IMR-90 (cell line): ENCODE measurements at regions of chr1 and their contacts with region 1.

Region 1: DNA sequence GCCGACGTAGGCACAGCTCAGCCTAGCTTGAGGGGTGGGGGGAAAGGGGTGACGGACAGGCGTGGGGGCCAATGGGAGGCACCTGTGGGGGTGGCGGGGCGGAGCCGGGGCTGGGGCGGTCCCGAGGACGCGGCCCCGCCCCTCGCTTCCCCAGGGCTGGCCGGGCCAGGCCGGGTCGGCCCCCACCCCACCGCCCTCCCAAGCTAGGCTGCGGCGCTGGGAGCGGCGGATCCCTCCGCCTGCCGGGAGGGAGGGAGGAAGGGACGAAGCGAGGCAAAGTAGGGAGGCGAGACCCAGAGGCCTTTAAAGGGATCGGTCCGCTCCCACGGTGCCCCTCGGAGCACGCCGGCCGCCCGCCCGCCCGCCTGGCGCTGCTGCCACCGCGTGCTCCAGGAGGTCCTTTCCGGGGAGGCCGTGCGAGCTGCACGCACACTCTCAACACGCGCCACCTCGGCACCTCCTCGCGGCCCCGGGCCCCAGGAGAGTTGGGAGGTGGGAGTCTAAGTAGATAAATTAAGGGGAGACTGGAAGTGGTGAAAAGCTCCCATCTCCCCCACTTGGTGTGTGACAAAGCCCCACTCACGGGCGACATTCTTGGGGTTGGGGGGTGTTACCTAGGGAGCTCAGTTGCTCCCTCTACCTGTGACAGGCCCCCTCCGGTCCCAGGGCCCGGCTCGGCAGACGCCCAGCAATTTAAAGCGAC is 373 bp upstream of the MEF2D start:
- DNase-seq: peak; percentile 96
- ATAC-seq: peak; percentile 80
- H3K4me3 ChIP-seq: peak overlapping the region; percentile 92
- H3K27ac ChIP-seq: peak overlapping the region; percentile 96
- H3K4me1 ChIP-seq: peaks cover 51% of the 10 kb centered on the region
- H3K27me3 ChIP-seq: no peaks in the 10 kb centered on the region
- CTCF ChIP-seq: peak; percentile 51
- POLR2A ChIP-seq: peak; percentile 86; the same call in 1 of the 2 replicates
- RAD21 ChIP-seq: peak; percentile 36

Region 2: DNA sequence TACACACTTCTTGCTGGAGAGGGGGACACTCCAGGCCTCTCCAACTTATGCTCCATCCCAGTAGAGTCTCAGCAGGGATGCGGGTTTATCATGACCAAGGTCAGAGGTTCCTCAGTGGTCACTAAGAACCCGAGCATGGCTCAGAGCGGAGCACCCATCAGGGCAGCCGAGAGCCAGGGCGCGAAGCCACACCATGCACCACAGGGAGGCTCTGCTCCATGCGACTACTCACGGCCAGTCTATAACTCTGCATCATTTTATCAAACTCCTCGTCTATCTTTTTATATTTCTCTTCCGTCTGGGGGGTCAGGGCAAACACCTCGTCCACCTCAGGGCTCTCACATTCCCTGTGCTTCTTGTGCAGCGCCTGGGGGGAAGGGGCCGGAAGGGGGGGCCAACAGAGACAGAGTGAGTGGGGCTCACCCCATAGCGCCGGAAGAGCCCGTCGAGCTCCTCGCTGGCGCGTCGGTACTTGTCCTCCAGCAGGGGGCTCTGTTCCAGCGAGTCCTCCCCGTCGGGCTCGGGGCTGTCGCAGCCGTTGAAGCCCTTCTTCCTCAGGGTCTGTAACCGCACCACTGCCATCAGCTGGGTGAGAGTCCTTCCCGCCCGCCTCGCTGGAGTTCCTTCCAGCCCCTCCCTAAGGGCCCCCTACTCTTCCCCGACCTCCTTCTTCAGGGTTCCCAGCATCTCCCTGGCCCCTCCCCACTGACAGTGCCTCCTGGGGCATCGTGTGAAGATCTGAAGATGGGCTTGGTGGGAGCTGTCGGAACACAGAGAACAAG is 20.3 kb before region 1 on chr1:
- CTCF ChIA-PET with region 1: interaction called, 6 read pairs
- POLR2A ChIA-PET with region 1: interaction called, 8 read pairs
- dilution Hi-C with region 1: no loop called
- in situ Hi-C with region 1: no loop called
- intact Hi-C with region 1: loop called (anchors 1 kb)
- DNase-seq: peak; percentile 50
- ATAC-seq: peak; percentile 65; the same call in 1 of the 2 replicates
- H3K4me3 ChIP-seq: no peak overlapping the region
- H3K27ac ChIP-seq: no peak overlapping the region
- H3K4me1 ChIP-seq: peaks cover 33% of the 10 kb centered on the region
- H3K27me3 ChIP-seq: no peaks in the 10 kb centered on the region
- CTCF ChIP-seq: peak; percentile 63
- POLR2A ChIP-seq: no peak
- RAD21 ChIP-seq: peak; percentile 63

Region 3: GRCh38 chr1:156528041-156528630 is 27.2 kb after region 1 on chr1:
- CTCF ChIA-PET with region 1: interaction called, 3 read pairs
- POLR2A ChIA-PET with region 1: interaction called, 11 read pairs
- dilution Hi-C with region 1: no loop called
- in situ Hi-C with region 1: no loop called
- intact Hi-C with region 1: no loop called
- DNase-seq: no peak
- ATAC-seq: no peak
- H3K4me3 ChIP-seq: no peak overlapping the region
- H3K27ac ChIP-seq: no peak overlapping the region
- H3K4me1 ChIP-seq: no peaks in the 10 kb centered on the region
- H3K27me3 ChIP-seq: no peaks in the 10 kb centered on the region
- CTCF ChIP-seq: no peak
- POLR2A ChIP-seq: no peak
- RAD21 ChIP-seq: no peak

Region 4: DNA sequence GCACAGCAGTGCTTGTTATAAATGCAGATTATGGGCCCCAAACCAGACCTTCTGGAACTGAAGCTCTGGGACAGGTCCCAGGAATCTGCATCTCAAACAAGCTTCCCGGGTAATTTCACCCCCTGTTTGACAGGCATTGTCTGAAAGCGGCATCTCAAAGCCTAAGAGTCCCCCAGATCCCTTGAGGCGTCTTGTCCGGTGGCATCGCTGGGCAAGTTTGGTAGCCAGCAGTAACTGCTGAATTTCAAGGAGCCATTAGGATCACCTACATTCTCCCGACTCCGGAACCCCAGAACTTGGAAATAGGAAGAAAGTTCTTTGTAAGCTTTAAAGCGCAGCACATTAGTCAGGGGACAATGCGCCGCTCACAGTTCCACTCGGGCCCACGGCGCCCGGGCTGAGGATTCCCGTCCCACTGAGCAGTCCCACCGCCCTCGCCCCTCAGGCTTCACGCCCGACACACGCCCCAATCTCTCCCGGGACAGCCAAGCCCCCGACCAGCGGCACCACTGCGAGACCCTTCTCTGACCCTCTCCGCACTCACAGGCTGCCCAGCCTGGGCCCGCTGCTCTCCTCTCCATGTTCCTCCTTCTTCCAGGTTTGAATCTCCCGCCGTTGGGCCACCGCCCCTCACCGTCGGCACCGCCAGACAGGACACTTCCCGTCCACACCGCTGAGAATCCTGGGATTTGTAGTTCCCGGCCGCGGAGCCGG is 71.2 kb after region 1 on chr1 and contains the start of gene IQGAP3:
- CTCF ChIA-PET with region 1: no interaction called
- POLR2A ChIA-PET with region 1: interaction called, 4 read pairs
- dilution Hi-C with region 1: no loop called
- in situ Hi-C with region 1: no loop called
- intact Hi-C with region 1: loop called (anchors 2 kb)
- DNase-seq: peak; percentile 69
- ATAC-seq: peak; percentile 75
- H3K4me3 ChIP-seq: peak within 1 kb of the TSS; percentile 73
- H3K27ac ChIP-seq: peak within 1 kb of the TSS; percentile 66
- H3K4me1 ChIP-seq: peaks cover 7% of the 10 kb centered on the region
- H3K27me3 ChIP-seq: peaks cover 15% of the 10 kb centered on the region
- CTCF ChIP-seq: no peak
- POLR2A ChIP-seq: no peak; the same call in 1 of the 2 replicates
- RAD21 ChIP-seq: no peak
- total RNA-seq, gene IQGAP3: 13.6 TPM in 2 replicates

Region 5: GRCh38 chr1:156629825-156630418 is 129.0 kb after region 1 on chr1:
- CTCF ChIA-PET with region 1: no interaction called
- POLR2A ChIA-PET with region 1: no interaction called
- dilution Hi-C with region 1: no loop called
- in situ Hi-C with region 1: no loop called
- intact Hi-C with region 1: no loop called
- DNase-seq: no peak
- ATAC-seq: no peak
- H3K4me3 ChIP-seq: no peak overlapping the region
- H3K27ac ChIP-seq: no peak overlapping the region
- H3K4me1 ChIP-seq: no peaks in the 10 kb centered on the region; the same call in 1 of the 2 replicates
- H3K27me3 ChIP-seq: peaks cover 56% of the 10 kb centered on the region
- CTCF ChIP-seq: no peak
- POLR2A ChIP-seq: no peak
- RAD21 ChIP-seq: no peak